Endothelial cell of umbilical vein (primary cell): ENCODE measurements at regions of chr2 and their contacts with region 1.

Region 1: GRCh38 chr2:149743842-149744448 is 156.4 kb upstream of the MMADHC start:
- DNase-seq: no peak
- H3K4me3 ChIP-seq: no peak overlapping the region
- H3K27ac ChIP-seq: no peak overlapping the region
- H3K4me1 ChIP-seq: peaks cover 23% of the 10 kb centered on the region
- H3K27me3 ChIP-seq: no peaks in the 10 kb centered on the region
- CTCF ChIP-seq: no peak
- POLR2A ChIP-seq: no peak

Region 2: DNA sequence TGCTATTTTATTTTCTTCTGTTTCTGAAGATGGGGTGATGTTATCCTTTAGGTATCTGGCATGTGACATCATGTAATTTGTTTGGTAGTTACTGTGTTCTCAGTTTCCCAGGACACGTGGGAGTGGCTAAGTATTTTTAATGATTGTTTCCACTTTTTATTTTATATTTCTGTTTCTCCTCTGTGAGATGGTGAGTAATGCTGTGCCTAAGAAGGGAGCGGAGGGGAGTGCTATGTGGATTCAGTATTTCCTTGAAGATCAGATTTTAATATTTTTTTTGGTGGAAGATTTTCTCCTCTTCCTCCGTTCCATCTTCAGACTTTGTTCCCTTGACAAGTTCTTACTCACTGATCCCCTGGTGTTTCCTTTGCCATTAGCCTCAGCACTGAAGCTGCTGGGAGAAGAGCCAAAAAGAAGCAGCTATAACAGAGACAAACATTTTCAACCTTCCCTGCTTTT is 23.6 kb after region 1 on chr2:
- CTCF ChIA-PET with region 1: interaction called, 5 read pairs
- POLR2A ChIA-PET with region 1: interaction called, 3 read pairs
- dilution Hi-C with region 1: no loop called
- intact Hi-C with region 1: loop called (anchors 2 kb)
- DNase-seq: peak; percentile 67
- H3K4me3 ChIP-seq: no peak overlapping the region
- H3K27ac ChIP-seq: peak overlapping the region; percentile 70
- H3K4me1 ChIP-seq: peaks cover 34% of the 10 kb centered on the region
- H3K27me3 ChIP-seq: no peaks in the 10 kb centered on the region
- CTCF ChIP-seq: no peak
- POLR2A ChIP-seq: no peak